ENCODE measurements at regions of chr14 and their contacts with region 1.

Region 1: GRCh38 chr14:81990312-81990761 is 456.7 kb upstream of the SEL1L start:
- DNase-seq: peak; percentile 6 to 52
- ATAC-seq: peak in 1 of 2 experiments; percentile 52; a peak in 2 of 6 replicates
- H3K4me3 ChIP-seq: no peak overlapping the region
- H3K27ac ChIP-seq: no peak overlapping the region
- H3K4me1 ChIP-seq: no peaks in the 10 kb centered on the region
- CTCF ChIP-seq: peak; percentile 73
- EP300 ChIP-seq: no peak
- POLR2A ChIP-seq: no peak
- RAD21 ChIP-seq: peak; percentile 79 to 88

Region 2: DNA sequence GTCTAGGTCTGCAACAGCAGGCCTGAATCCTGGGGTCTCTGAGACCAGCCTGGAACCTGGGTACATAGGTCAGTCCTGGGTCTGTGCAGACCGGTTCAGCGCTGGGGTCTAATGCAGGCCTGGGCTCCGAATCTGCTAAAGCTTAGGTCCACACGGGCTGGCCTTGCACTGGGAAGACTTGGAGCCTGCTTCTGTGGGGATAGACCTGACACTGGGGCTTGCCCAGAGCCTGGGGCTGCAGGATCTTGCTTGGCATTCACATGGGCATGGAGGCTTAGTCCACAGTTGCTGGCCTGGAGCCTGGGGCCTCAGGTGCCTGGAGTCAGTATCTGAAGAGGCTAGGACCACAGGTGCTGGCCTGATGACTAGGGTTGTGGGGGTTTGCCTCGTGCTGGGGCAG is 86.9 kb before region 1 on chr14:
- CTCF ChIA-PET with region 1: no interaction called
- POLR2A ChIA-PET with region 1: no interaction called
- DNase-seq: no peak
- ATAC-seq: no peak
- H3K4me3 ChIP-seq: no peak overlapping the region
- H3K27ac ChIP-seq: no peak overlapping the region
- H3K4me1 ChIP-seq: no peaks in the 10 kb centered on the region
- CTCF ChIP-seq: no peak
- EP300 ChIP-seq: no peak
- POLR2A ChIP-seq: no peak
- RAD21 ChIP-seq: no peak

Region 3: GRCh38 chr14:82003426-82003825 is 13.1 kb after region 1 on chr14:
- CTCF ChIA-PET with region 1: interaction called, 13 read pairs
- POLR2A ChIA-PET with region 1: no interaction called
- DNase-seq: no peak
- ATAC-seq: no peak
- H3K4me3 ChIP-seq: no peak overlapping the region
- H3K27ac ChIP-seq: no peak overlapping the region
- H3K4me1 ChIP-seq: no peaks in the 10 kb centered on the region
- CTCF ChIP-seq: no peak
- EP300 ChIP-seq: no peak
- POLR2A ChIP-seq: no peak
- RAD21 ChIP-seq: no peak

Region 4: DNA sequence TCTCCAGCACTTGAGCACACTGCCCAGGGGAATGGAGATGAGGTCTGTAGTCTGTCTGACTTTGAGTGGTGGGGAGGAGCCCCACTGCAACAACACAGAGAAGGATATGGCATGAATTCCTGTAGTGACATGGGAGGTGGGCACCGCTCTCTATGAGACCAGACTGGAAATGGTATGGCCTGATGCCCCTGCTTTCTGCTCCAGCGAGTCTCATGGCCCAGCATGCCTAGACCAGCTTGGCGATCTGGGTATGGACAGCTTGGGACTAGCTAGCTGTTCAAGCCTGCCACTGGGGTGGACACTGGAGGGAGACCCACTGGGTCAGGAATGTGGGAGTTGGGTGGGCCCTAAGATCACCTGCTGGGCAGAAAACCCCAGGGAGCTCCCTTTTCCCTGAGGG is 21.1 kb after region 1 on chr14:
- CTCF ChIA-PET with region 1: interaction called, 15 read pairs
- POLR2A ChIA-PET with region 1: no interaction called
- DNase-seq: no peak
- ATAC-seq: no peak
- H3K4me3 ChIP-seq: no peak overlapping the region
- H3K27ac ChIP-seq: no peak overlapping the region
- H3K4me1 ChIP-seq: no peaks in the 10 kb centered on the region
- CTCF ChIP-seq: no peak
- EP300 ChIP-seq: no peak
- POLR2A ChIP-seq: no peak
- RAD21 ChIP-seq: no peak